ENCODE measurements at regions of chr11 and their contacts with region 1.

Region 1: DNA sequence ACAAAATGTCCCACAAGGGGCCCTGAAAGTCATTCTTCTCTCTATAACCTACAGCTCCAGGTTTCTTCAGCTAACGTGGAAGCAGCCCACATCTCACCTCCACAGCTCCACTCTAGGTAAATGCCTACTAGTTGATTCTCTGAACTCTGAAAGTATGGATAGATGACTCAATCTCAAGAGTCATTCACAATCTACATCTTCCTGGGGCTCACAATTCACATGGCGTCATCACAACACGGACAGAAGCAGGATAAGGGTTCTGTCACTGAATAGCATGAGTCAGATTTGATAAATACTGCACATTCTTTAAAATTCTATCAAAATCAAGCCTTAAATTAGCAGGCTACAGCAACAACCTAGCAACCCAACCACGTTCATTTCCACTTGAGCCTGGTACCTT is 96.3 kb downstream of the PLEKHA7 start:
- DNase-seq: no peak
- H3K4me3 ChIP-seq: no peak overlapping the region
- H3K27ac ChIP-seq: no peak overlapping the region
- H3K4me1 ChIP-seq: no peaks in the 10 kb centered on the region
- H3K27me3 ChIP-seq: peaks cover 0 to 8% of the 10 kb centered on the region in 2 experiments
- CTCF ChIP-seq: no peak
- POLR2A ChIP-seq: no peak

Region 2: GRCh38 chr11:16685914-16686313 is 232.0 kb before region 1 on chr11:
- CTCF ChIA-PET with region 1: no interaction called
- POLR2A ChIA-PET with region 1: no interaction called
- dilution Hi-C with region 1: no loop called
- intact Hi-C with region 1: no loop called
- DNase-seq: no peak
- H3K4me3 ChIP-seq: no peak overlapping the region
- H3K27ac ChIP-seq: no peak overlapping the region
- H3K4me1 ChIP-seq: no peaks in the 10 kb centered on the region
- H3K27me3 ChIP-seq: no peaks in the 10 kb centered on the region
- CTCF ChIP-seq: no peak
- POLR2A ChIP-seq: no peak

Region 3: GRCh38 chr11:16902781-16903378 is 15.1 kb before region 1 on chr11:
- CTCF ChIA-PET with region 1: interaction called, 6 read pairs
- POLR2A ChIA-PET with region 1: no interaction called
- dilution Hi-C with region 1: no loop called
- intact Hi-C with region 1: loop called (anchors 2 kb)
- DNase-seq: peak; percentile 80
- H3K4me3 ChIP-seq: peak overlapping the region in 1 of 3 experiments; percentile 20
- H3K27ac ChIP-seq: peak overlapping the region; percentile 72
- H3K4me1 ChIP-seq: peaks cover 26% of the 10 kb centered on the region
- H3K27me3 ChIP-seq: no peaks in the 10 kb centered on the region
- CTCF ChIP-seq: no peak
- POLR2A ChIP-seq: no peak

Measured in endothelial cell of umbilical vein (primary cell).